ENCODE measurements at regions of chr2 and their contacts with region 1.

Region 1: DNA sequence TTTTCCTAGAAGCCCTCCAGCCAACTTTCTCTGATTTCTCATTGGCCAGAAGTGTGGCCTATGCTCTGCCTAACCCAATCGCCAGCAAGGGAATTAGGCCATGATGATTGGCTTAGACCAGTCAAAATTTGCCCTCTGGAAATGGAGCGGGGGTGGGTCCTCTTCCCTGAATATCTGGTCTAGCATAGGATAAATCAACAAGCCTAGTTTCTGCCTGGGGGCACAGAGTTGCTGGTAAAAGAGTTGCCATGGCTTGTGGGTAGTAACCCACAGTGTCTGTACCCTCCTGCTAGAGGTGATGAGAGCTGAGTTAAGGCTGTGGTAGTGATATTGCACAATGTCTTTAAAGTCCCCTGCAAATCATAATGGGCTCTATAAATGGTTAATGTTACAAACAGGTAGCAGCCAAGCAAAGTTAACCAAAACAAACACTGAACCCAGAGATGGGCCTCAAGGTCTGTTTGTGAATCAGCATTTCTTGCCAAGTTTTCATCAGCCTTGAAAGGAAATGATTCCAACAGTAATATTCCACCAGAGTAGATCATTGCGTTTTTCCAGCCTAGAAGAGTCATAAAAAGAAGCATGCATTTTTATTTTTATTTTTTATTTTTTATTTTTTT is 19.3 kb downstream of the GALM start:
- DNase-seq: peak; percentile 87
- ATAC-seq: peak; percentile 81
- H3K4me3 ChIP-seq: peak overlapping the region in 1 of 3 experiments; percentile 3; a peak in 1 of 6 replicates
- H3K27ac ChIP-seq: peak overlapping the region; percentile 44
- H3K4me1 ChIP-seq: peaks cover 45% of the 10 kb centered on the region
- H3K27me3 ChIP-seq: no peaks in the 10 kb centered on the region
- CTCF ChIP-seq: no peak
- EP300 ChIP-seq: peak in 1 of 2 experiments; percentile 90; a peak in 2 of 4 replicates
- POLR2A ChIP-seq: no peak
- RAD21 ChIP-seq: no peak

Region 2: DNA sequence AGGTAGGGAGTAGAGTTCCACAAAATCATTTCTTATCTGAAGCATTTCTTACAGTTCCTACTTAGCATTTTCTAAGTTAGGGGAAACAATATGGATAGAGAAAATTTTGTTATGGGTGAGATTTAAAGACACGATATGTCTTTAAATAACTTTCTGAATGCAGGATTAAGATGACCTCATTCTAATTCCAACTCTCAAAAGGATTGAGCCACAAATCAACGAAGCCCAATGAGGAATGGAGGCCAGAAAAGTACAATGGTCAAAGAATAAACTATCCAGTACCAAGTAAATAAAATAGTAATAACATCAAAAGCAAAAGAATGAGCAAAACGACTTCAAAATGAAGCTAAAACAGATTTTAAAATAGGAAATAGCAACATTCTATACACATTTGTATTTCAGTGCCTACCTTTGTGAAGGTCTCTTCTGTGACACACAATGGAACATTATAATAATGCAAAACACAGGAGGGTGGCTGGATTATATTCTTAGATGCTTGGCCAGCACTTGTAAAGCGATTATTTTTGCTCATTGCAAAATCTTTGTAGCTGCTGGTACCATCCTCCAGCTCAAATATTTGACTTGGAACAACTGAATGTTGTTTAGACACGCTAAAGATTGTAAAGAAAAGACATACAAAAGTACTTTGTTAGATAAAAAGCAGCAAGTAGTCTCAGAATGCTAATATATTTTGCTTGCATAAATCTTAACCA is 116.3 kb before region 1 on chr2:
- CTCF ChIA-PET with region 1: no interaction called
- POLR2A ChIA-PET with region 1: no interaction called
- in situ Hi-C with region 1: no loop called
- intact Hi-C with region 1: no loop called
- DNase-seq: no peak
- ATAC-seq: no peak
- H3K4me3 ChIP-seq: no peak overlapping the region
- H3K27ac ChIP-seq: no peak overlapping the region
- H3K4me1 ChIP-seq: peaks cover 11% of the 10 kb centered on the region; the same call in 1 of the 2 replicates
- H3K27me3 ChIP-seq: no peaks in the 10 kb centered on the region
- CTCF ChIP-seq: no peak
- EP300 ChIP-seq: no peak
- POLR2A ChIP-seq: no peak
- RAD21 ChIP-seq: no peak

Region 3: DNA sequence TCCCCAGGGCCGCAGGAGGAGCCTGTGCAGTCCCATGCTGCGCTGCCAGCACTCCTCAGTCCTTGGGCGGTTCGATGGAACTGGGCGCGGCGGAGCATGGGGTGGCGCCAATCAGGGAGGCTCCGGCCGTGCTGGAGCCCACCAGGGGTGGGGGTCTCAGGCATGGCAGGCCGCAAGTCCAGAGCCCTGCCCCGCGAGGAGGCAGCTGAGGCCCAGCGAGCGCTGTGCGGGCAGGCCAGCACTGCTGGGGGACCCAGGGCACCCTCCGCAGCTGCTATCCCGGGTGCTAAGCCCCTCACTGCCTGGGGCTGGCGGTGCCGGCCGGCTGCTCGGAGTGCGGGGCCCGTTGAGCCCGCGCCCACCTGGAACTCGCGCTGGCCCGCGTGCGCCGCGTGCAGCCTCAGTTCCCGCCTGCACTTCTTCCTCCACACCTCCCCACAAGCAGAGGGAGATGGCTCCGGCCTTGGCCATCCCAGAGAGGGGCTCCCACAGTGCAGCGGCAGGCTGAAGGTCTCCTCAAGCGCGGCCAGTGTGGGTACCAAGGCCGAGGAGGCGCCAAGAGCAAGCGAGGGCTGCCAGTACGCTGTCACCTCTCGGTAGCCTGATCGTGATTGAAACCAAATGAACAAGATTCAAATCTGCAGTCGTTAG is 42.1 kb before region 1 on chr2:
- CTCF ChIA-PET with region 1: no interaction called
- POLR2A ChIA-PET with region 1: no interaction called
- in situ Hi-C with region 1: no loop called
- intact Hi-C with region 1: loop called (anchors 1 kb)
- DNase-seq: no peak
- ATAC-seq: peak; percentile 26; the same call in 1 of the 3 replicates
- H3K4me3 ChIP-seq: no peak overlapping the region
- H3K27ac ChIP-seq: no peak overlapping the region
- H3K4me1 ChIP-seq: peaks cover 24% of the 10 kb centered on the region
- H3K27me3 ChIP-seq: no peaks in the 10 kb centered on the region
- CTCF ChIP-seq: no peak
- EP300 ChIP-seq: no peak
- POLR2A ChIP-seq: no peak
- RAD21 ChIP-seq: no peak

Region 4: GRCh38 chr2:38734299-38735058 is 49.3 kb after region 1 on chr2:
- CTCF ChIA-PET with region 1: no interaction called
- POLR2A ChIA-PET with region 1: no interaction called
- in situ Hi-C with region 1: no loop called
- intact Hi-C with region 1: loop called (anchors 5 kb)
- DNase-seq: no peak
- ATAC-seq: no peak
- H3K4me3 ChIP-seq: no peak overlapping the region
- H3K27ac ChIP-seq: peak overlapping the region; percentile 40
- H3K4me1 ChIP-seq: peaks cover 66% of the 10 kb centered on the region
- H3K27me3 ChIP-seq: no peaks in the 10 kb centered on the region
- CTCF ChIP-seq: no peak
- EP300 ChIP-seq: no peak
- POLR2A ChIP-seq: no peak
- RAD21 ChIP-seq: no peak